ENCODE measurements at regions of chr1 and their contacts with region 1.

Region 1: GRCh38 chr1:147389532-147390524 is 147.3 kb downstream of the CHD1L start:
- DNase-seq: peak; percentile 67
- H3K4me3 Mint-ChIP-seq: no peak overlapping the region
- H3K27ac Mint-ChIP-seq: no peak overlapping the region
- H3K4me1 Mint-ChIP-seq: no peaks in the 10 kb centered on the region
- H3K27me3 Mint-ChIP-seq: peaks cover 38% of the 10 kb centered on the region
- CTCF ChIP-seq: peak; percentile 91

Region 2: GRCh38 chr1:147235822-147236221 is 154.0 kb before region 1 on chr1:
- CTCF ChIA-PET with region 1: no interaction called
- POLR2A ChIA-PET with region 1: no interaction called
- intact Hi-C with region 1: no loop called
- DNase-seq: no peak
- H3K4me3 Mint-ChIP-seq: no peak overlapping the region
- H3K27ac Mint-ChIP-seq: no peak overlapping the region
- H3K4me1 Mint-ChIP-seq: peaks cover 7% of the 10 kb centered on the region
- H3K27me3 Mint-ChIP-seq: no peaks in the 10 kb centered on the region
- CTCF ChIP-seq: no peak

Region 3: GRCh38 chr1:147273409-147274336 is 116.2 kb before region 1 on chr1:
- CTCF ChIA-PET with region 1: interaction called, 53 read pairs
- POLR2A ChIA-PET with region 1: interaction called, 9 read pairs
- intact Hi-C with region 1: loop called (anchors 1 kb)
- DNase-seq: peak; percentile 92
- H3K4me3 Mint-ChIP-seq: peak overlapping the region; percentile 55
- H3K27ac Mint-ChIP-seq: peak overlapping the region; percentile 93
- H3K4me1 Mint-ChIP-seq: peaks cover 14% of the 10 kb centered on the region
- H3K27me3 Mint-ChIP-seq: no peaks in the 10 kb centered on the region
- CTCF ChIP-seq: peak; percentile 37

Region 4: GRCh38 chr1:147287133-147287865 is 102.5 kb before region 1 on chr1:
- CTCF ChIA-PET with region 1: interaction called, 13 read pairs
- POLR2A ChIA-PET with region 1: interaction called, 3 read pairs
- intact Hi-C with region 1: no loop called
- DNase-seq: peak; percentile 38
- H3K4me3 Mint-ChIP-seq: no peak overlapping the region
- H3K27ac Mint-ChIP-seq: no peak overlapping the region
- H3K4me1 Mint-ChIP-seq: peaks cover 5% of the 10 kb centered on the region
- H3K27me3 Mint-ChIP-seq: no peaks in the 10 kb centered on the region
- CTCF ChIP-seq: no peak

Region 5: GRCh38 chr1:147377263-147378246 is 12.3 kb before region 1 on chr1:
- CTCF ChIA-PET with region 1: interaction called, 46 read pairs
- POLR2A ChIA-PET with region 1: no interaction called
- intact Hi-C with region 1: no loop called
- DNase-seq: no peak
- H3K4me3 Mint-ChIP-seq: no peak overlapping the region
- H3K27ac Mint-ChIP-seq: no peak overlapping the region
- H3K4me1 Mint-ChIP-seq: no peaks in the 10 kb centered on the region
- H3K27me3 Mint-ChIP-seq: peaks cover 4% of the 10 kb centered on the region
- CTCF ChIP-seq: no peak